MCF 10A (cell line): ENCODE measurements at regions of chr4 and their contacts with region 1.

Region 1: GRCh38 chr4:47704693-47705325 is 133.1 kb downstream of the CORIN start:
- DNase-seq: peak; percentile 28
- H3K4me3 Mint-ChIP-seq: no peak overlapping the region
- H3K27ac Mint-ChIP-seq: no peak overlapping the region
- H3K4me1 Mint-ChIP-seq: peaks cover 5% of the 10 kb centered on the region
- H3K27me3 Mint-ChIP-seq: no peaks in the 10 kb centered on the region
- CTCF ChIP-seq: peak; percentile 46

Region 2: DNA sequence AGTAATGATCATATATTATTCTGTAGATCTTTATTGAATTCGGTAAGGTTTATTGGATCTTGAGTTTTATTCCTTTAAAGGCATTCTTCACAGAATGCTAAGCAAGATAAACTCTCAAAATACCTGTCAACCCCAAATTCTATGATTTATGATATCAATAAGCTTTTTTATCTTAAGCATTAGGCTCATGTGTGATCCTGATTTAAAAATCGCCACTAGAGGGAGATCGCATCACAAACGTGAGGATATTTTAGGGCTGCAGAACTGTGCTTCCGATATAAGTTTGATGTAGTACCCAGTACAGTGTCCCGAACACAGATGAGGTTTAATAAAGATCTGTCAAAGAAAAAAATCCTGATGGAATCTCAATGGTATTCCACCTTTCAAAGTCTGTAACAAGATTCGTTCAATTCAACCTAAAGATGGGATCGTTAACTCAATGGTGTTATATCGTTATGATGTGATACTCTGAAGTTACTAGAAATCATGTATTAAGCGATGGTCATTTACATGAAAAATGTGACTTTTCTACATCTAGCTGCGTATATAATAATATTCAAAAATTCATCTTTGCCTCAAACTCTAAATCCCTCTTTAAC is 35.9 kb before region 1 on chr4:
- CTCF ChIA-PET with region 1: interaction called, 12 read pairs
- POLR2A ChIA-PET with region 1: interaction called, 3 read pairs
- intact Hi-C with region 1: no loop called
- DNase-seq: peak; percentile 64
- H3K4me3 Mint-ChIP-seq: no peak overlapping the region
- H3K27ac Mint-ChIP-seq: no peak overlapping the region
- H3K4me1 Mint-ChIP-seq: peaks cover 5% of the 10 kb centered on the region
- H3K27me3 Mint-ChIP-seq: no peaks in the 10 kb centered on the region
- CTCF ChIP-seq: peak; percentile 72

Region 3: GRCh38 chr4:47692639-47693180 is 12.1 kb before region 1 on chr4:
- CTCF ChIA-PET with region 1: interaction called, 16 read pairs
- POLR2A ChIA-PET with region 1: no interaction called
- intact Hi-C with region 1: no loop called
- DNase-seq: no peak
- H3K4me3 Mint-ChIP-seq: no peak overlapping the region
- H3K27ac Mint-ChIP-seq: no peak overlapping the region
- H3K4me1 Mint-ChIP-seq: no peaks in the 10 kb centered on the region
- H3K27me3 Mint-ChIP-seq: no peaks in the 10 kb centered on the region
- CTCF ChIP-seq: no peak

Region 4: GRCh38 chr4:47741200-47741599 is 36.4 kb after region 1 on chr4:
- CTCF ChIA-PET with region 1: interaction called, 13 read pairs
- POLR2A ChIA-PET with region 1: no interaction called
- intact Hi-C with region 1: no loop called
- DNase-seq: peak; percentile 65
- H3K4me3 Mint-ChIP-seq: no peak overlapping the region
- H3K27ac Mint-ChIP-seq: peak overlapping the region; percentile 63
- H3K4me1 Mint-ChIP-seq: peaks cover 8% of the 10 kb centered on the region
- H3K27me3 Mint-ChIP-seq: no peaks in the 10 kb centered on the region
- CTCF ChIP-seq: no peak

Region 5: GRCh38 chr4:47933840-47934239 is 229.0 kb after region 1 on chr4:
- CTCF ChIA-PET with region 1: interaction called, 24 read pairs
- POLR2A ChIA-PET with region 1: no interaction called
- intact Hi-C with region 1: loop called (anchors 1 kb)
- DNase-seq: peak; percentile 51
- H3K4me3 Mint-ChIP-seq: no peak overlapping the region
- H3K27ac Mint-ChIP-seq: no peak overlapping the region
- H3K4me1 Mint-ChIP-seq: peaks cover 20% of the 10 kb centered on the region
- H3K27me3 Mint-ChIP-seq: no peaks in the 10 kb centered on the region
- CTCF ChIP-seq: peak; percentile 44